CD8-positive, alpha-beta memory T cell (primary cell): ENCODE measurements at regions of chr11 and their contacts with region 1.

Region 1: GRCh38 chr11:65013692-65014145 is 241 bp upstream of the ARL2 start:
- DNase-seq: peak; percentile 80 to 92 (median 88)
- H3K4me3 ChIP-seq: peak overlapping the region; percentile 99
- H3K4me3 Mint-ChIP-seq: peak overlapping the region; percentile 92 to 96 (median 94)
- H3K27ac ChIP-seq: peak overlapping the region; percentile 97
- H3K27ac Mint-ChIP-seq: peak overlapping the region; percentile 95 to 99 (median 98)
- H3K4me1 ChIP-seq: peaks cover 12% of the 10 kb centered on the region
- H3K4me1 Mint-ChIP-seq: peaks cover 18 to 33% (median 23%) of the 10 kb centered on the region in 3 donors
- H3K27me3 ChIP-seq: no peaks in the 10 kb centered on the region
- H3K27me3 Mint-ChIP-seq: no peaks in the 10 kb centered on the region

Region 2: GRCh38 chr11:64846998-64847666 is 166.6 kb before region 1 on chr11:
- CTCF ChIA-PET with region 1: interaction called, 18 read pairs
- POLR2A ChIA-PET with region 1: interaction called, 3 read pairs
- DNase-seq: peak; percentile 85 to 94 (median 90)
- H3K4me3 ChIP-seq: no peak overlapping the region
- H3K4me3 Mint-ChIP-seq: peak overlapping the region in 5 of 7 donors; percentile 33 to 81 (median 47)
- H3K27ac ChIP-seq: no peak overlapping the region
- H3K27ac Mint-ChIP-seq: peak overlapping the region; percentile 26 to 84 (median 75)
- H3K4me1 ChIP-seq: peaks cover 62% of the 10 kb centered on the region
- H3K4me1 Mint-ChIP-seq: peaks cover 52 to 68% (median 62%) of the 10 kb centered on the region in 3 donors
- H3K27me3 ChIP-seq: no peaks in the 10 kb centered on the region
- H3K27me3 Mint-ChIP-seq: no peaks in the 10 kb centered on the region

Region 3: DNA sequence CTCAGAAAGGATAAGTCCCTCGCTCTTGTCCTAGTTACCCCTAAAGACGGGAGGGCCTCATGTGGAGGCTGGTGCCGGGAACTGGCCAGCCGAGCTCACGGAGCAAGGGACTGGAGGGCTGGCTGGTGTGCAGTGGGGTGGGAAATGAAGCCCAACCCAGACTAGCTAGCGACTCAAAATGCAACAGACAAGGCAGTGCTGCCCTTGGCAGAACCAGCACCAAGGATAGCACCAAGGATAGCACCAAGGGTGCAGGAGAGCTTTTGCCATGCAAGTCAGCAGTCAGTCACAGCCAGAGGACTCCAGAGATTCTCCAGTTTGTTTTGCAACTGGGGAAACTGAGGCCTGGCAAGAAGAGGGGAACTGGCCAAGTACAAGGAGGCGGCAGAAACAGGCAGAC is 10.4 kb before region 1 on chr11:
- CTCF ChIA-PET with region 1: interaction called, 10 read pairs
- POLR2A ChIA-PET with region 1: no interaction called
- DNase-seq: no peak
- H3K4me3 ChIP-seq: no peak overlapping the region
- H3K4me3 Mint-ChIP-seq: no peak overlapping the region
- H3K27ac ChIP-seq: no peak overlapping the region
- H3K27ac Mint-ChIP-seq: no peak overlapping the region
- H3K4me1 ChIP-seq: peaks cover 9% of the 10 kb centered on the region
- H3K4me1 Mint-ChIP-seq: peaks cover 3 to 6% (median 4%) of the 10 kb centered on the region in 3 donors
- H3K27me3 ChIP-seq: no peaks in the 10 kb centered on the region
- H3K27me3 Mint-ChIP-seq: peaks cover 0 to 4% of the 10 kb centered on the region in 2 donors

Region 4: DNA sequence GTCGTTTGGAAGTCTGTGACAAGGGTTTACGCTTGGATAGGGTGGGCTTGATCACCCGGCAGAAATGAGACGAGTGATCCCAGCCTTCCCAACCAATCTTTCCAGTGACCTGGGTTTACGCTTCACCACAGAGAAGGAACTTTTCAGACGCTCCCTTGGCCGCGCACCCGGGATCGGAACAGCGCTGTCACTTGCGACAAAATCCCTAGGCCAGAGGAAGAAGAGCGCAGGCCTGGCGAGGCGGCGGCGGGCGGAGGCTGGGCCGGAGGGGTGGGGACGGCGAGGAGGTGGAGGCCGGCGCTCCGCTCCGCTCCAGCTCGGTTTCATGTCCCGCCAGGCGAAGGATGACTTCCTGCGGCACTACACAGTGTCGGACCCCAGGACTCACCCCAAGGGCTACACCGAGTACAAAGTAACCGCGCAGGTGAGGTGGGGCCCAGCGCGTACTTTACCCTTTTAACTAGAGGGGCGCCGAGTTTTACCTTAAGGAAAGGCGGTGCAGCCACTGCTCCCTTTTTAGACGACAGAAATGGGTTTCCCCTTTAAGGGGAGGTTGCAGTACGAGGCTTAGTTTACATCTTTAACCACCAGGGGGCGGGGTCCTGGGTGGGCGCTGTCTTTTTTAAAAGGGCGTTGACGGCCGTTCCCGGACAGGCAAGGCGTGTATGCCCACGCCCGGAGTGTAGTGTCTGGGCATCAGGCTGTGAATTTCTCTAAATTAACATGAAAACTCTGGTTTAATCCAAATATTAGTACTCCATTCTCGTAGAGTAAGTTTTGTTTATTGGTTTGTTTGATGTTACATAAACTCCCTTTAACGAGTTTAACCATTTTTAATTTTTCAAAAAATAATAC is 13.7 kb after region 1 on chr11 and contains the start of gene SNX15:
- CTCF ChIA-PET with region 1: interaction called, 11 read pairs
- POLR2A ChIA-PET with region 1: no interaction called
- DNase-seq: peak; percentile 83 to 94 (median 92)
- H3K4me3 ChIP-seq: peak within 1 kb of the TSS; percentile 51
- H3K4me3 Mint-ChIP-seq: peak within 1 kb of the TSS; percentile 53 to 92 (median 83)
- H3K27ac ChIP-seq: peak within 1 kb of the TSS; percentile 52
- H3K27ac Mint-ChIP-seq: peak within 1 kb of the TSS; percentile 81 to 96 (median 92)
- H3K4me1 ChIP-seq: peaks cover 17% of the 10 kb centered on the region
- H3K4me1 Mint-ChIP-seq: peaks cover 20 to 24% (median 21%) of the 10 kb centered on the region in 3 donors
- H3K27me3 ChIP-seq: no peaks in the 10 kb centered on the region
- H3K27me3 Mint-ChIP-seq: no peaks in the 10 kb centered on the region
- total RNA-seq, gene SNX15: 18.3 to 21.6 TPM

Region 5: DNA sequence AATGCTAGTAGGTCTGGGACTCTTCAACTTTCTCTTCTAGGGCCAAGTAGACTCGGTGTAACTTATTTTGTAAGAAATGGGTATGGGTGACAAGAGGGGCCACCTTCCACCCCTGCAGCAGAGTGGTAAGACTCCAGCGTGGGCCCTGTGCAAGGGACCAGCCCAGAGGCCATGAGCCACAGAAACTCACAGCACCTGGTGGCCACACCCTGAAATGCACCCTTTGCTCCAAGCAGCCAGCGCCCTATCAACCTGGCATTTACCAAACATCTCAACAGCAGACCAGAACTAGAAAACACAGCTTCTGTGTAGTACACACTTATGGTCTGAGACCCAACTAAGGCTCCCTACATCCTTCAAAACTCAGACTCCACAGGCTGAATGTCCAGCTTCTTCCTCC is 64.4 kb after region 1 on chr11:
- CTCF ChIA-PET with region 1: interaction called, 10 read pairs
- POLR2A ChIA-PET with region 1: no interaction called
- DNase-seq: peak; percentile 41 to 79 (median 50)
- H3K4me3 ChIP-seq: no peak overlapping the region
- H3K4me3 Mint-ChIP-seq: peak overlapping the region in 1 of 7 donors; percentile 59
- H3K27ac ChIP-seq: no peak overlapping the region
- H3K27ac Mint-ChIP-seq: peak overlapping the region in 7 of 8 donors; percentile 35 to 95 (median 68)
- H3K4me1 ChIP-seq: peaks cover 5% of the 10 kb centered on the region
- H3K4me1 Mint-ChIP-seq: peaks cover 4 to 15% (median 7%) of the 10 kb centered on the region in 3 donors
- H3K27me3 ChIP-seq: no peaks in the 10 kb centered on the region
- H3K27me3 Mint-ChIP-seq: no peaks in the 10 kb centered on the region

Region 6: GRCh38 chr11:65111744-65112414 is 98.2 kb after region 1 on chr11 and contains the start of gene TM7SF2:
- CTCF ChIA-PET with region 1: interaction called, 27 read pairs
- POLR2A ChIA-PET with region 1: interaction called, 4 read pairs
- DNase-seq: peak; percentile 89 to 96 (median 94)
- H3K4me3 ChIP-seq: peak within 1 kb of the TSS; percentile 81
- H3K4me3 Mint-ChIP-seq: peak within 1 kb of the TSS; percentile 83 to 90 (median 87)
- H3K27ac ChIP-seq: peak within 1 kb of the TSS; percentile 65
- H3K27ac Mint-ChIP-seq: peak within 1 kb of the TSS; percentile 67 to 94 (median 86)
- H3K4me1 ChIP-seq: peaks cover 48% of the 10 kb centered on the region
- H3K4me1 Mint-ChIP-seq: peaks cover 30 to 57% (median 30%) of the 10 kb centered on the region in 3 donors
- H3K27me3 ChIP-seq: no peaks in the 10 kb centered on the region
- H3K27me3 Mint-ChIP-seq: peaks cover 0 to 2% of the 10 kb centered on the region in 2 donors
- total RNA-seq, gene TM7SF2: 17.8 to 17.9 TPM

Region 7: DNA sequence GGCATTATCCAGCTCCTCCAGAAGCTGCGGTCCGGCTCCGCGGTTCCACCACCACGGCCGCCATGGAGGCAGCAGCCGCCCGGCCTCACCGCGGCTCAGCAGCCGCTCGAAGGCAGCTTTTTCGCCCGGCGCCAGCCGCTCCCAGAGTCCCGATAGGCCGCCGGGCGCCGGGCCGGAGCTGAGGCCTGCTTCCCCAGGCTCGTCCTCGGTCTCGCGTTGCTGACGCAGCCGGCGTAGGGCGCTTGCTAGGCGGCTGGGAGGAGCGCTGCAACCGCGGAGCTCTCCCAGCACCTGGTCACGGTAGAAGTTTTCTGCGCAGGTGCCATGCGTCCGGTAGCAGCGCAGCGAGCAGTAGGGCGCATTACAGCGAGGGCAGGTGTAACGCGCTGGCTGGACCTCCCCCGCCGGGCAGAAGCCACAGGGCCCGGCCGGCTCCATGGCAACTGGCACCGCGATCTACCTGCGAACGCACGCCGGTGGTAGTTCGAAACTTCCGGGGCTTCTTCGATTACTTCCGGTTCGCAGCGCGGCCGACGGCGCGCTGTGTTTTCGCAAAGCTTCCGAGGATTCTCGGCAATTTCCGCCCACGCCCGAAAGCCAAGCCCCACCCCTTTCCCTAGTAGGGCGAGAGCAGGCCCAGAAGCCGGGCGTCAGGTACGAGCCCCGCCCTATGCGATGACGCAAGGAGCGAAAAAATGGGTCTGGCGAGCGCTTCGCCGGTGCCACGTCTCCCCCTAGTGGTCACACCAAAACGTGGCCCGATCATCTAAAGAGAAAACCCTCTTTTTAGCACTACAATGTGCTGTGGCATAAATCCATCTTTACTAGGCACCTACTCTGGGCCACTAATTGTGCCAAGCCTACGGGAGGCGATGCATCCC is 103.7 kb after region 1 on chr11 and contains the start of gene ZNHIT2:
- CTCF ChIA-PET with region 1: interaction called, 27 read pairs
- POLR2A ChIA-PET with region 1: interaction called, 6 read pairs
- DNase-seq: peak; percentile 99 to 100 (median 100)
- H3K4me3 ChIP-seq: peak within 1 kb of the TSS; percentile 85
- H3K4me3 Mint-ChIP-seq: peak within 1 kb of the TSS; percentile 88 to 94 (median 90)
- H3K27ac ChIP-seq: peak within 1 kb of the TSS; percentile 91
- H3K27ac Mint-ChIP-seq: peak within 1 kb of the TSS; percentile 92 to 99 (median 97)
- H3K4me1 ChIP-seq: peaks cover 45% of the 10 kb centered on the region
- H3K4me1 Mint-ChIP-seq: peaks cover 39 to 77% (median 47%) of the 10 kb centered on the region in 3 donors
- H3K27me3 ChIP-seq: no peaks in the 10 kb centered on the region
- H3K27me3 Mint-ChIP-seq: peaks cover 0 to 3% of the 10 kb centered on the region in 2 donors
- total RNA-seq, gene ZNHIT2: 15.2 to 20.1 TPM